ENCODE measurements at regions of chr1 and their contacts with region 1.

Region 1: GRCh38 chr1:169809370-169810095 is 14.8 kb upstream of the METTL18 start:
- DNase-seq: no peak

Region 2: GRCh38 chr1:169546087-169546995 is 263.2 kb before region 1 on chr1:
- intact Hi-C with region 1: loop called (anchors 5 kb)
- DNase-seq: no peak

Region 3: DNA sequence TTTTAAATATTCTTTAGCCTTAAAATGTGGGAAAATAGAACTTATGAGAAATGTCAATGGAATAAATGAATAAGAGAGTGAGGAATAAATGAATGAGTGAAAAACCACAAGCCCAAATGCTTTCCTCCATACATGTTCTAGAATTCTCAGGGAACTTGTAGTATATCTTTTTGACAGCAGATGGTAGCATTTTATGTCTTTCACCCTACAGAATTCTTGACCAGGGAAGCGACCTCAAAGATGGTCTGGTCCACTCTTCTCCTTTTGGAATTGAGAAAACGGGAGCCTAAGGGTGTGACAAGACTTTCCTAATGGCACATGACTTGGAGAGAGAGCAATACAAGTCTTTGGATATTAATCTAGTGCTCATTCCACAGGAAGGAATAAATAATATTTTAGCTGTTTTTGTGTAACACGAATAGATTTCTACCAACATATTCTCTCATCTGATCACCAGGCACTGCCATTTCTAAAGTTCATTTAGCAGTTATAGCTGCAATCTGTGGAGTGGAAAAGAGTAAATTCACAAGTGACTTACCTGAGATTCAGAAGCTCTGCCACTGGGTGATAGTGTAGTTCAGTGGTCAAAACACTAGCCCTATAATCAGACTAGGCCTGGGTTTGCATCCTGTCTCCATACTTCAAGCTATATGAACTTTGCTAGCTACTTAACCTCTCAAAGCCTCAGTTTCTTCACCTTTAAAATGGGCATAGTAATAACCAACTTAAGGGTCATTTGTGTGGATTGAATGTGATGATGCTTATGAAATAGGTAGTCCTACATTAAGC is 208.2 kb before region 1 on chr1:
- intact Hi-C with region 1: loop called (anchors 2 kb)
- DNase-seq: no peak

Measured in cardiac septum (tissue), 1 donor.